Psoas muscle (tissue), 8 donors: ENCODE measurements at regions of chr5 and their contacts with region 1.

Region 1: GRCh38 chr5:157820593-157821252 is 38.2 kb downstream of the CLINT1 start:
- DNase-seq: no peak
- ATAC-seq: peak in 1 of 4 donors; percentile 55
- H3K4me3 ChIP-seq: no peak overlapping the region
- H3K27ac ChIP-seq: no peak overlapping the region
- H3K4me1 ChIP-seq: peaks cover 29% of the 10 kb centered on the region
- H3K27me3 ChIP-seq: no peaks in the 10 kb centered on the region
- CTCF ChIP-seq: peak; percentile 46

Region 2: GRCh38 chr5:157858527-157859226 is 38.0 kb after region 1 on chr5 and contains the start of gene CLINT1:
- intact Hi-C with region 1: loop called in 1 of 2 experiments (anchors 5 kb)
- DNase-seq: peak; percentile 94 to 96
- ATAC-seq: peak; percentile 98 to 100 (median 99)
- H3K4me3 ChIP-seq: peak within 1 kb of the TSS; percentile 99
- H3K27ac ChIP-seq: peak within 1 kb of the TSS; percentile 98
- H3K4me1 ChIP-seq: peaks cover 32% of the 10 kb centered on the region
- H3K27me3 ChIP-seq: no peaks in the 10 kb centered on the region
- CTCF ChIP-seq: no peak
- total RNA-seq, gene CLINT1: 50.8 to 83.3 (median 68.4) TPM

Region 3: GRCh38 chr5:157948738-157949410 is 128.2 kb after region 1 on chr5:
- intact Hi-C with region 1: loop called (anchors 2 to 5 kb)
- DNase-seq: peak; percentile 81 to 85
- ATAC-seq: peak; percentile 87 to 99 (median 94)
- H3K4me3 ChIP-seq: peak overlapping the region; percentile 19
- H3K27ac ChIP-seq: no peak overlapping the region
- H3K4me1 ChIP-seq: peaks cover 7% of the 10 kb centered on the region
- H3K27me3 ChIP-seq: no peaks in the 10 kb centered on the region
- CTCF ChIP-seq: peak; percentile 88

Region 4: DNA sequence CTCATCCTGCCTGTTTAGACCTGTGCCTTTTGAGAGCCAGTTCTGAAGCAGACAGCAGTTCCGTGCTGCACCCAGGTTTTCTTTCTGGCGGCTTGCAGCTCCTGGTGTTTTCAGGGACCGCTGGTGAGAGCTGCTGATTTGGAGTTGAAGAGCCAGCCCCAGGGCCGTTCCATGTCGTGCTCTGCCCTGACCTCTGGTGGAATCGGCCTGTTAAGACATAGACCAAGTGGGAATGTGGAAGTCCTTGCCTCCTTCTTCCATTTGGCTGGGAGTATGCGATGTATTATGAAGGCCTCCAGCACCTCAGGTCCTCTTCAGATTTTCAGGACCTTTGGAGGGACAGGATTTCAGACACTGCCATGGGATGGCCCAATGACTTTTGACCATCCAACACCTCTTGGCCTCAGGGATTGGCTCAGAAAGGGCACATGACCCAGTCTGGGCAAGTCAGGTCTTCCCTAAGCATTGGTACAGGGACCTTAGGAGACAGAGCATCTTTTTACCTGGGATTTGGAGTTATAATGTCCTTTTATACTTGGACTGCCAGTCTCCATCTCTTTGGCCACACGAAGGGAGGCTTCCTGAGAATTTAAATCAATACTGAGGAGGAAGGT is 174.3 kb after region 1 on chr5:
- intact Hi-C with region 1: loop called (anchors 2 to 10 kb)
- DNase-seq: peak; percentile 54 to 65
- ATAC-seq: peak; percentile 69 to 90 (median 82)
- H3K4me3 ChIP-seq: no peak overlapping the region
- H3K27ac ChIP-seq: no peak overlapping the region
- H3K4me1 ChIP-seq: no peaks in the 10 kb centered on the region
- H3K27me3 ChIP-seq: peaks cover 0 to 2% (median 0%) of the 10 kb centered on the region in 3 donors
- CTCF ChIP-seq: peak; percentile 59